A549 (cell line): ENCODE measurements at regions of chr2 and their contacts with region 1.

Region 1: DNA sequence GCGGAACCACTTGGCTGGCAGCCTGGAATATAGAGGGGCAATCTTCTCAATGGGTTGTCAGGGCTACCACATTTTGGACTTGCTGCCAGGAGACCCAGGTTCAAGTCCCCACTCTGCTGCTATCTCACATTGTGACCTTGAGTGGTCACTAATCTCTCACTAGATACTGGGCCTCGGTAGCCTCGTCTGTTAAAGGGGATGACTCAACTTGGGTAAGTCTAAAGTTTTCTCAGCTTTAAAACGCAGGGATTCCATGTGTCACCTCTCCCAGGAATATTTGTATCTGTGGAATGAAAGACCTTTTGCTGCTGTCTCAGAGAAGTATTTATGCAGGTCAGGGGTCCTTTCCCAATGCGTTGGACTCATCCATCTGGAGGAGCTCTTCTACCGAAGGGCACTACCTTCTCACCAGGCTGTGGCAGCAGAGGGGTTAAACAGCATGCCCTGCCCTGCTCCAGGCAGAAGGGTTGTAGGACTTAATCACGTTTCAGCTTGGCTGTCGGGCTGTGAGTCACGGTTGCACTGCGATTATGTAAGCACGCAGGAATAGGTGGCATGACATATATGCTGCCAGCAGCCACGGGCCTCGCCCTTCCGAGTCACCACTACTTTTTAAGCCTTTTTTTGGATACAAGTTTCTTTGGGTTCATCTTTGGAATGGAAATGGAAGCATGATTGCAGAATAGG is 86.5 kb downstream of the SEMA4F start:
- DNase-seq: peak; percentile 88 to 95
- ATAC-seq: peak; percentile 95 to 98
- H3K4me3 ChIP-seq: no peak overlapping the region
- H3K27ac ChIP-seq: peak overlapping the region; percentile 34 to 75
- H3K4me1 ChIP-seq: peaks cover 28% of the 10 kb centered on the region
- CTCF ChIP-seq: no peak
- EP300 ChIP-seq: peak; percentile 5 to 45; a peak in 2 of 5 replicates
- POLR2A ChIP-seq: no peak
- RAD21 ChIP-seq: peak; percentile 22 to 41; a peak in 4 of 5 replicates

Region 2: GRCh38 chr2:74751981-74752851 is 11.7 kb after region 1 on chr2:
- CTCF ChIA-PET with region 1: interaction called, 11 read pairs
- POLR2A ChIA-PET with region 1: no interaction called
- DNase-seq: no peak
- ATAC-seq: 0 out of 6 replicates have a peak, but pooled peaks of 1 of the 2 experiments have one; percentile 30
- H3K4me3 ChIP-seq: no peak overlapping the region
- H3K27ac ChIP-seq: no peak overlapping the region
- H3K4me1 ChIP-seq: no peaks in the 10 kb centered on the region
- CTCF ChIP-seq: no peak
- EP300 ChIP-seq: no peak
- POLR2A ChIP-seq: no peak
- RAD21 ChIP-seq: no peak